ENCODE measurements at regions of chr1 and their contacts with region 1.

Region 1: DNA sequence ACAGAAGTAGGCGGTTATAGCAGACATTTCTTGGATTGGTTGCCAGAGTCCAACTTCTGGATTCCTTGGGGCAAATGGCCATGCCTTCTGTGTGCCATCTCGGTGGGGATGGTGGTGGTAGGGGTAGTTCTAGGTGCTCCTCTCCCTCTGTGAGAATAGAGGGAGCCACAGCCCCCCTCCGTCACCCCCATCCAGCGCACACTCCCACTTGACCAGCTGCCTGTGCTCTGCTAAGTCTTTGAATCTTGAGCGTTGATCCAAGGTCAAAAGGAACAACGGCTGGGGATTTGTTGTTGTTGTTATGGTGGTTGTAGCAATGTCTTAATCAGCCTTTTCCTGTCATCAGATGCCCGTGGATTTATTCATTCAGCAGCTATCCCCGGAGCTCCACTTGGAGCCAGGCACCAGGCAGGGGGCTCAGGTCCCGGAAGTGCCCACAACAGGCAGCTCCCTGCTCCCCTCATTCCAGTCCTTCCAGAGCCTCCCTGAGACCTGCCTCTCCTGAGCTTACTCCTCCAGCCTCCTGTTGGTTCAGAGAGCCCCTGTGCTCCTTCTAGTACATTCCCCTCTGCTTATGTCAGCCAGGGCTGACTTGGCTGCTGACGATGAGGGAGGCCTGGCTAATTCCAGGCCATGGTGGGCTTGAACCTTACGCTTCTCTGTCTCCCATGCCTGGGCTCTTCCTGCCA is 146.6 kb upstream of the WNT4 start:
- DNase-seq: no peak
- ATAC-seq: no peak
- H3K4me3 ChIP-seq: no peak overlapping the region
- H3K27ac ChIP-seq: no peak overlapping the region
- H3K4me1 ChIP-seq: no peaks in the 10 kb centered on the region
- H3K27me3 ChIP-seq: peaks cover 0 to 35% (median 5%) of the 10 kb centered on the region in 3 donors
- CTCF ChIP-seq: no peak

Region 2: GRCh38 chr1:22231993-22232690 is 57.3 kb before region 1 on chr1:
- intact Hi-C with region 1: no loop called
- DNase-seq: peak in 1 of 2 donors; percentile 4
- ATAC-seq: no peak
- H3K4me3 ChIP-seq: no peak overlapping the region
- H3K27ac ChIP-seq: no peak overlapping the region
- H3K4me1 ChIP-seq: no peaks in the 10 kb centered on the region
- H3K27me3 ChIP-seq: peaks cover 0 to 10% (median 0%) of the 10 kb centered on the region in 3 donors
- CTCF ChIP-seq: no peak

Region 3: DNA sequence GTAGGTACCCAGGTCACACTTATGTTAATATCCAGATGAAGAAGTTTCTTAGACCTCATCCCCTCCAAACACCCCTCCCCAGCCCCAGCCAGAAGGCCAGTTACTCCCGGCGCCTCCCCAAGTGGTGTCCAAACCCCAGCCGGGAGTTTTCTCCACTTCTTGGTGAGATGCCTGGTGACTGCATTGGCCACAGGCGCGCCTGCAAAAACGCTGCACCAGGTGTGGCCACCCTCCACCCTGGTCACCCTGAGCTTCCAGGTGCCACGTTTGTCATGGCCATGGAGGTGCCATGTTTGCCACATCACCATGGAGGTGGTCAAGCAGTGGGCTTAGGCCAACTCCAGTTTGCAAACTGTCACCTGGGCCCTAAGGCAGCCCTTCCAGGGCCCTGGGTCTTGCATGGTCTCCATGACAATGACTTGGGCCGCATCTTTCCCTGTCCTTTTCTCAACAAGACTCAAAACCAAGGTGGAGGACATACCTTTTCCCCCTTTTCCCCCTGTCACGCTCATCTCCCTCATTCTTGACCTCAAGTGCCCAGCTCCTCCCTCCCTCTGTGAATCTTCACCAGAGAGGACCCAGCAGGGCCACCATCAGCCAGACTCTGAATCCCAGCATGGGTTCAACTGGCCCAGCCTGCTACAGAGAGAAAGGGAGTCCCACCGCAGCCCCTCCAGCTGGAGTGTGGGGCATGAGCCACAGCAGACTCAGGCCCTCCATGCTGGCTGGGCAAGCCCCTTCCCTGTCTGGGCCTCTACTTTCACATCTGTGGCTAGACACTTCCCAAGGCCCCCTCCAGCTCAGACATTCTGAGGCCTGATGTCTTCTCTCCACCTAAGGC is 36.3 kb after region 1 on chr1:
- intact Hi-C with region 1: loop called in 1 of 2 experiments (anchors 1 kb)
- DNase-seq: no peak
- ATAC-seq: no peak
- H3K4me3 ChIP-seq: no peak overlapping the region
- H3K27ac ChIP-seq: no peak overlapping the region
- H3K4me1 ChIP-seq: no peaks in the 10 kb centered on the region
- H3K27me3 ChIP-seq: peaks cover 0 to 6% (median 4%) of the 10 kb centered on the region in 3 donors
- CTCF ChIP-seq: no peak